HCT116 (cell line): ENCODE measurements at regions of chr7 and their contacts with region 1.

Region 1: DNA sequence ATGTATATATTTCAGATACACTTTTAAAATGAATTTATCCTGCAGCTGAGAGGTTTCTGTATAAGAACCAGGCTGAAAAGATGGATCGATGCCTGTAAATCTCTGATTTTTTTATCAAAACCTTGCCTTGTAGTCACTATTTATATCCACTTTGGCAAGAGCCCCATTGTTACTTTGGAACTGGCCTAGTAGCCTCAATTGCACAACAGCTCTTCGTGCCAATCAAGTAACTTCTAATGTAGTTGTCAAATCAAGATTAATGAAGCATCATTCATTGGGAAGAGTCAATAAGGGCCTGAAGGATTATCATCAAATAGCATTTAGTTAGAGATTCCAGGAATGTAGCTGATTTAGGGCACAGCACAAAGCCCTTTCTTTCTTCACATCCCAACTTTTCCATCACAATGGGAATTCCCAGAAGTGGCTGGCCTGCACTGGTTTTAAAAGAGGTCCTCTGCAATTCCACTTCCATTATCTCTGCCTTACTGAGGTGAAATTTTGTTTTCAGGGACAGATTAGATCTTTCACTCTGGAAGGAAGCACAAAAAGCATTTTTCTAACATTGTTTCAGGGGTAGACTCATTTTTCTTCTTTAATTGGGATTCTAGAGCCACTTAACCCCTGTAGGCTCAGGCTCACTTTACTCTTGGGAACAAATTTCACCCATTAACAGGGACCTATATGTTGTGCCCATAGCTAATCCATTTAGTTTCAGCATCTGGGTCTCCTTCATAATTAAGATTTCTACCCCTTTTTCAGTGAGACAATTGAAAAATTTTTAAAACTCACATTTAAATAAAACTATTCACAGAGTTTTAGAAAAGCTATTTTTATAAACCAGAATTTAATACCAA is 97.8 kb downstream of the CALCR start:
- DNase-seq: no peak
- ATAC-seq: no peak
- H3K4me3 ChIP-seq: no peak overlapping the region
- H3K27ac ChIP-seq: no peak overlapping the region
- H3K4me1 ChIP-seq: no peaks in the 10 kb centered on the region
- H3K27me3 ChIP-seq: peaks cover 4% of the 10 kb centered on the region; the same call in 1 of the 2 replicates
- CTCF ChIP-seq: no peak
- POLR2A ChIP-seq: no peak
- RAD21 ChIP-seq: no peak

Region 2: GRCh38 chr7:93337052-93337451 is 139.7 kb before region 1 on chr7:
- CTCF ChIA-PET with region 1: no interaction called
- POLR2A ChIA-PET with region 1: no interaction called
- RAD21 ChIA-PET with region 1: no interaction called
- intact Hi-C with region 1: no loop called
- DNase-seq: no peak
- ATAC-seq: no peak
- H3K4me3 ChIP-seq: no peak overlapping the region
- H3K27ac ChIP-seq: no peak overlapping the region
- H3K4me1 ChIP-seq: no peaks in the 10 kb centered on the region
- H3K27me3 ChIP-seq: no peaks in the 10 kb centered on the region
- CTCF ChIP-seq: no peak
- POLR2A ChIP-seq: no peak
- RAD21 ChIP-seq: no peak

Region 3: DNA sequence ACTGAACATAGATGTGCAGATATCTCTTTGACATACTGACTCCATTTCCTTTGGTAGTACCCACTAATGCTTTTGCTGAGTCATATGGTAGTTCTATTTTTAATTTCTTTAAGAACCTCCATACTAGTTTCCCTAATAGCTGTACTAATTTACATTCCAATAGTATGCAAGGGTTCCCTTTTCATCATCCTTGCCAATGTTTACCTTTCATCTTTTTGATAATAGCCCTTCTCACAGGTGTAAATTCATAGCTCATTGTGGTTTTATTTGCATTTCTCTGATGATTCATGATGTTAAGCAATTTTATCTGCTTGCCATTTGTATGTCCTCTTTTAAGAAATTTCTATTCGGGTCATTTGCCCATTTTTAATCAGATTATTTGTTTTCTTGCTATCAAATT is 62.1 kb before region 1 on chr7:
- CTCF ChIA-PET with region 1: no interaction called
- POLR2A ChIA-PET with region 1: no interaction called
- RAD21 ChIA-PET with region 1: no interaction called
- intact Hi-C with region 1: loop called (anchors 10 kb)
- DNase-seq: no peak
- ATAC-seq: no peak
- H3K4me3 ChIP-seq: no peak overlapping the region
- H3K27ac ChIP-seq: no peak overlapping the region
- H3K4me1 ChIP-seq: no peaks in the 10 kb centered on the region
- H3K27me3 ChIP-seq: no peaks in the 10 kb centered on the region
- CTCF ChIP-seq: no peak
- POLR2A ChIP-seq: no peak
- RAD21 ChIP-seq: no peak